K562 (cell line): ENCODE measurements at regions of chr16 and their contacts with region 1.

Region 1: GRCh38 chr16:74107795-74108618 is 188.6 kb upstream of the PSMD7 start:
- DNase-seq: peak; percentile 40 to 70 (median 47)
- ATAC-seq: peak; percentile 95
- H3K4me3 ChIP-seq: 0 out of 2 replicates have a peak overlapping the region, but pooled peaks have one; percentile 13
- H3K27ac ChIP-seq: no peak overlapping the region
- H3K4me1 ChIP-seq: no peaks in the 10 kb centered on the region
- H3K27me3 ChIP-seq: no peaks in the 10 kb centered on the region
- CTCF ChIP-seq: peak; percentile 73 to 87 (median 74)
- EP300 ChIP-seq: no peak
- POLR2A ChIP-seq: no peak
- RAD21 ChIP-seq: peak; percentile 26 to 58; a peak in 2 of 4 replicates

Region 2: GRCh38 chr16:73846356-73846755 is 261.7 kb before region 1 on chr16:
- CTCF ChIA-PET with region 1: no interaction called
- POLR2A ChIA-PET with region 1: no interaction called
- in situ Hi-C with region 1: no loop called
- intact Hi-C with region 1: no loop called
- DNase-seq: no peak
- ATAC-seq: no peak
- H3K4me3 ChIP-seq: no peak overlapping the region
- H3K27ac ChIP-seq: no peak overlapping the region
- H3K4me1 ChIP-seq: no peaks in the 10 kb centered on the region
- H3K27me3 ChIP-seq: peaks cover 0 to 6% of the 10 kb centered on the region in 2 experiments; a peak in 1 of 5 replicates
- CTCF ChIP-seq: peak in 1 of 3 experiments; percentile 25; a peak in 1 of 6 replicates
- EP300 ChIP-seq: no peak
- POLR2A ChIP-seq: no peak
- RAD21 ChIP-seq: no peak

Region 3: GRCh38 chr16:74019612-74020011 is 88.4 kb before region 1 on chr16:
- CTCF ChIA-PET with region 1: no interaction called
- POLR2A ChIA-PET with region 1: no interaction called
- in situ Hi-C with region 1: no loop called
- intact Hi-C with region 1: no loop called
- DNase-seq: no peak
- ATAC-seq: no peak
- H3K4me3 ChIP-seq: no peak overlapping the region
- H3K27ac ChIP-seq: no peak overlapping the region
- H3K4me1 ChIP-seq: no peaks in the 10 kb centered on the region
- H3K27me3 ChIP-seq: 0 out of 5 replicates have a peak, but pooled peaks cover 0 to 2% of the 10 kb centered on the region in 2 experiments
- CTCF ChIP-seq: no peak
- EP300 ChIP-seq: no peak
- POLR2A ChIP-seq: no peak
- RAD21 ChIP-seq: no peak

Region 4: GRCh38 chr16:74257061-74257460 is 149.1 kb after region 1 on chr16:
- CTCF ChIA-PET with region 1: no interaction called
- POLR2A ChIA-PET with region 1: no interaction called
- in situ Hi-C with region 1: no loop called
- intact Hi-C with region 1: loop called (anchors 10 kb)
- DNase-seq: no peak
- ATAC-seq: no peak
- H3K4me3 ChIP-seq: no peak overlapping the region
- H3K27ac ChIP-seq: no peak overlapping the region
- H3K4me1 ChIP-seq: no peaks in the 10 kb centered on the region; a peak in 1 of 5 replicates
- H3K27me3 ChIP-seq: peaks cover 31% of the 10 kb centered on the region in 2 experiments; a peak in 4 of 5 replicates
- CTCF ChIP-seq: no peak
- EP300 ChIP-seq: no peak
- POLR2A ChIP-seq: no peak
- RAD21 ChIP-seq: no peak